ENCODE measurements at regions of chr9 and their contacts with region 1.

Region 1: DNA sequence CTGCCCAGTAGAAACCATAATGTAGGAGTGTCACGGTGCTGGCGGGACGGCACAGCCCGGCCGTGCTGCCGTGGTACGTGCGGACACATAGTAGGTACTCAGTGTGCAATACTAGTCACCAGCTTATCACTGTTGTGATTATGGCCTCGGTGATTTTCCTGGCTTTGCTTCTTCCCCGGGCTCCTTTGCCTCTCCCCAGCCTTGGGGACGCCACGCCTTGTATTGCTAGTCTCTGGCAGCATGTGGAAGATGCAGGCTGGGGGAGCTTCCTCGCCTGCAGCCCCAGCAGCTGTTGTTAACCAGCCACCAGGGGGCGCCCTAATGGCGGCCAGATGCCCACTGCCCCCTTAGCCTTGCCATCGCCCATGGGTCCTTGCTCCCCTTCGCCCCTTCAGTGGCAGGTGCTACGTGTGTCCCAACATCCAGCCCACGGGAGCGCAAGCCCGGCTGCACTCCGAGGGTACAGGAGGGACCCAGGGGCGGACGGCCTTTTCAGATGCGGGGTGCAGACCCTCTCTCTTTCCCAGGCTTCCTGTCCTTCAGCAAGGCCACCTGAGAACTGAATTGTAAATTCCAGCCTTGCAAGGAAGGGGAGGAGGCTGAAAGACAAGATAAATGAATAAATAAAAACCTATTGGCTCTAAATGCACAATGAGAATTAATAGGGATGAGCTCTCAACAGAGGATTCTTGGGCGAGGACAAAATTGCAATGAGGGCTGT is 8.0 kb downstream of the NTNG2 start:
- DNase-seq: peak; percentile 72
- ATAC-seq: peak; percentile 77
- H3K4me3 Mint-ChIP-seq: no peak overlapping the region
- H3K27ac Mint-ChIP-seq: no peak overlapping the region
- H3K4me1 Mint-ChIP-seq: no peaks in the 10 kb centered on the region
- H3K27me3 Mint-ChIP-seq: peaks cover 21% of the 10 kb centered on the region
- CTCF ChIP-seq: peak; percentile 96

Region 2: DNA sequence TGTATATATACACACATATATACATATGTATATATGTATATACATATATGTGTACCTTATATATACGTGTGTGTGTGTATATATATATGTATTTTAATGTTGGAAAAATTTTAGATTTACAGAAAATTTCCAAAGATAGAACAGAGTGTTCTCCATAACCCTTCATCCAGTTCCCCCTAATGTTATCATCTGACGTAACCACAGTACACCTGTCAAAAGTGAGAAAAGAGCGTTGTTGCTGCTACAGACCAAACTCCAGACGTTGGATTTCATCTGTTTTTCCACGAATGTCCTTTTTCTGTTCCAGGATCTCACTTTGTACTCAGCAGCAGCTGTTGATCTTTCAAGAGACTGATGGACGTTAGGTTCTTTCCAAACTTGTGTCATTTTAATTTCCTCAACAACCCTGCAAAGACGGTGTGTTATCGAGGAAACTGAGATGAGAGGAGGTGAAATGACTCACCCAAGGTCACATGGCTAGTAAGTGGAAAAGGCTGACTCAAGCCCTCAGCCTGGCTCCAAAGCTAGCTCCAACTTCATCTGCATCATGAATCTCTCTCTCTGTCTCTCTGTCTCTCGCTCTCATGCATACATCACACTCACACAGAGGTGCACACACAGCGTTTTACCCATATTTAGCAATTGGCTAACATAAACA is 25.0 kb before region 1 on chr9:
- CTCF ChIA-PET with region 1: interaction called, 23 read pairs
- POLR2A ChIA-PET with region 1: no interaction called
- intact Hi-C with region 1: no loop called
- DNase-seq: peak; percentile 56
- ATAC-seq: peak; percentile 90
- H3K4me3 Mint-ChIP-seq: no peak overlapping the region
- H3K27ac Mint-ChIP-seq: no peak overlapping the region
- H3K4me1 Mint-ChIP-seq: peaks cover 14% of the 10 kb centered on the region
- H3K27me3 Mint-ChIP-seq: peaks cover 65% of the 10 kb centered on the region
- CTCF ChIP-seq: no peak

Region 3: DNA sequence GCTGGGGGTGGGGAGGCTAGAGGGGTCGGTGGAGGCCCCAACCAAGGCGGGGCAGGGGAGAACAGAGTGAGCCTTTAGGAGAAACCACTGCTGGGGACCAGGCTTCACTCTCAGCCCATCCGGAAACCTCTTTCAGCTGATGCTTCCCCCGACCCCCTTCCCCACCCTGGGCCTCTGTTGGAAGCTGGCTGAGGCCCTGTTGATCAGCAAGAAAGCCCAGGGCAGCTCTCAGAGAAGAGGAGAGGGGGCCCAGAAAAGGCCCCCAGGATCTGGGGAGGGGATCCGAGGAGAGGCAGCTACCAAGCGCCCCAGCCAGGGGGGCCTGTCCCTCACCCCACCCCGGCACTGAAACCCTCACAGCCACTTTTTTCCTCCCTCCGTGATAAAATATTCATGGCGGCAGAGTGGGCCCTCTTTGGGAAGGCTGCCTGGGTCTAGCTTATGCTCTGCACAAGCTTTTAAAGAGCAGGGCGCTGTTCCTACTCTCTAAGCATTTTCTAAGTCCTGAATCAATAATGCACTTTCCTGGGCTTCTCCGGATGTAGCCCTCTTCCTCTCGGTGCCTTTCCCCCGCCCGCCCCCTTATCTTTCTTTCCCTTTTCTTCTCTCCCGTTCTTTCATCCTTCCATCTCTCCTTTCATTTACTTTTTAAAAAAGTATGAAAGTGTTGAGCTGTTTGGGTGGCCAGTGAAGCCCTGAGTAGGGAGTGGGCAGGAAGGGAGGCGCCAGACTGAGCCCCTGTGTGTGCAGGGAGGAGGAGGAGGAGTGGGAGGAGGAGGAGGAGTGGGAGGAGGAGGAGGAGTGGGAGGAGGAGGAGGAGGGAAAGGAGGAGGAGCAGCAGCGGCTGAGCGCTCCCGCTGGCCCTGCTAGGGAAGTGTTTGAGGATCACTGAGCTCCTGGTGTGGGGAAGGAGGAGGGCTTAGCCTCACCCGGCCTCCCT is 15.5 kb after region 1 on chr9:
- CTCF ChIA-PET with region 1: interaction called, 12 read pairs
- POLR2A ChIA-PET with region 1: no interaction called
- intact Hi-C with region 1: no loop called
- DNase-seq: no peak
- ATAC-seq: no peak
- H3K4me3 Mint-ChIP-seq: no peak overlapping the region
- H3K27ac Mint-ChIP-seq: no peak overlapping the region
- H3K4me1 Mint-ChIP-seq: no peaks in the 10 kb centered on the region
- H3K27me3 Mint-ChIP-seq: peaks cover 9% of the 10 kb centered on the region
- CTCF ChIP-seq: no peak

Region 4: DNA sequence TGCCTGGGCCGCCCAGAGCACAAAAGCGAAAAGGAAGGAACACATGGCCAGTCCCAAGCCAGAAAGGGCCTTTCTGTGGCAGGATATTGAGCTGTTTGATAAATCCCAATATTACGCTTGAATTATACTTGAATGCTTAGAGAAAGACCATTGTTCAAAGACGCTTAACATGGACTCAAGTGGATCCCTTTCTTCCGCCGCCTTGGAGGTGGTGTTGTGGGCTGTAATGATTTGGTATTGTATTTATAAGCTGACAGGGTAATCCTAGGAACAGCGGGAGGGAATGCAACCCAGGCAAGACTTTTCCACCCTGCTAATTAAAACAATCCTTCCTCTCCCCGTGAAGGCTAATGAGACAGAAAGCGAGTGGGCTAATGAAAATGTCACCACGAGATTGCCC is 265.0 kb after region 1 on chr9:
- CTCF ChIA-PET with region 1: no interaction called
- POLR2A ChIA-PET with region 1: no interaction called
- intact Hi-C with region 1: no loop called
- DNase-seq: no peak
- ATAC-seq: no peak
- H3K4me3 Mint-ChIP-seq: no peak overlapping the region
- H3K27ac Mint-ChIP-seq: no peak overlapping the region
- H3K4me1 Mint-ChIP-seq: no peaks in the 10 kb centered on the region
- H3K27me3 Mint-ChIP-seq: peaks cover 41% of the 10 kb centered on the region
- CTCF ChIP-seq: no peak

Measured in activated CD8-positive, alpha-beta T cell treated with anti-CD3 and anti-CD28 coated beads for 36 hours (primary cell).